MCF 10A (cell line): ENCODE measurements at regions of chr16 and their contacts with region 1.

Region 1: DNA sequence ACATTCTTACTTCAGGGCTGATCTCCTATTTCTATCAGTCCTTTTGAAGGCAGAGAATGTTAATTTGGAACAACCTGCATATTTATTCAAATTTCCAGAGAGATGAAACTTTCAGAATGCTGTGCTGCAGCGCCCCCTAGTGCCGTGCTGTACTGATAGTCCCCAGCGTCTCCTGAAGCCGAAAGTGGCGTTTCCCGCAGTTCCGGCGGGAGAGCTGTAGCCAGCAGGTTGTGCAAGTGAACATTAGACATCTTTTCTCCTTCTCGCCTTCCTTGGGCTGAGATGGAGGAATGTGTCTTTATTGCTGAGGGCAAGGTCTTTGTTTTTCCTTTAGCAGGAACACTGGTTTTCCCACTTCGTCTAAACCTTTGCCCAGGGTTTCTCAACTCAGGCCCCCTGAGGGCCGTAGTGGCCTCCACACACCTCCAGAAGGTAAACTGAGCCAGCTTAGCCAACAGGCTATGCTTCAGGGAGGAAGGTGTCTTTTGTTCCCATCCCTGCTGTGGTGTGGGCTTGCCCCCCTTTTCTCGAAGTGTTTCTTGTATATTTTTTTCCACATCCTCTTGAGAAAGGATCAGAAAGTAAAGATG is 26.4 kb downstream of the USP10 start:
- DNase-seq: peak; percentile 89
- H3K4me3 Mint-ChIP-seq: peak overlapping the region; percentile 28
- H3K27ac Mint-ChIP-seq: no peak overlapping the region
- H3K4me1 Mint-ChIP-seq: peaks cover 26% of the 10 kb centered on the region
- H3K27me3 Mint-ChIP-seq: no peaks in the 10 kb centered on the region
- CTCF ChIP-seq: peak; percentile 93

Region 2: DNA sequence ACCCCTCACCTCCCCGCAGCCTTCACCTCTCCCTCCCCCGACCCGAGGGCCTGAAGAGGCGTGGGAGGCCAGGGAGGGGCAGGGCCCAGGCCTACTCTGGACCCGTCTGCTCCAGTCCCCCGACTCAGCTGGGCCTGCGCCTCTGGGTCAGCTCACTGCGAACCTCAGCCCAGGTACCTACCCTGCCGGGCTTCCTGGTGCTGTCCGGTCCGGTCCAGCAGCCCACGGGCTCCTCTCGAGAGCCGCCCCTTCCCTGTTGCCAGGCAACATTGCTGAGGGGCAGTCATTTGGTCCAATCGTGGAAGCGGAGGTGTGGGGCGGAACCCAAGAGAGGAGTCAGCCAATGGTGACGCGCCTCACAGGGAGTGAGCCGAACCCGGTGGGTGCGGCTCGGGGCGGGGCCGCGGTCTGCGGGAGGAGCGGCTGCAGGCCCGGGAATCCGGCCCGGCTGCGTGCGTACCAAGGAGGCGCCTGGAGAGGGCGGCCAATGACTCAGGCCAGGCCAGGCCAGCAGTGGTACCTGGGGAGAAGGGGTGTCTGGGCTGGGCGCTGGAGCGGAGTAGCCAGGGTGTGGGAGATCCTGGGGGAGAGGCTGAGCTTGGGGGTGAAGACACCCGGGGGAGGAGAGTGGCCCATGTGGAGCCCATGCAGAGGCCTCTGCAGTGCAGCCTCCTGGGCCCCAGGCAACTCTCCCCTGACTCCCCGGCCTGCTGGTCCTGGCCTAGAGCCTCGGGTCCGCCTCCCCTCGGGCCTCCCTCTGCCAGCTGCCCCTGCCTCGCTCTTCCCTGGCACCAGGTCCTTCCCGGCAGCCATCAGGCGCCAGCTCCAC is 221.5 kb before region 1 on chr16 and contains the start of gene MEAK7:
- CTCF ChIA-PET with region 1: interaction called, 20 read pairs
- POLR2A ChIA-PET with region 1: interaction called, 11 read pairs
- intact Hi-C with region 1: no loop called
- DNase-seq: peak; percentile 99
- H3K4me3 Mint-ChIP-seq: peak within 1 kb of the TSS; percentile 84
- H3K27ac Mint-ChIP-seq: peak within 1 kb of the TSS; percentile 88
- H3K4me1 Mint-ChIP-seq: peaks cover 52% of the 10 kb centered on the region
- H3K27me3 Mint-ChIP-seq: no peaks in the 10 kb centered on the region
- CTCF ChIP-seq: no peak
- total RNA-seq, gene MEAK7: 62.3 and 66.8 TPM in 2 replicates

Region 3: GRCh38 chr16:84635699-84636098 is 90.5 kb before region 1 on chr16:
- CTCF ChIA-PET with region 1: interaction called, 13 read pairs
- POLR2A ChIA-PET with region 1: no interaction called
- intact Hi-C with region 1: no loop called
- DNase-seq: no peak
- H3K4me3 Mint-ChIP-seq: no peak overlapping the region
- H3K27ac Mint-ChIP-seq: no peak overlapping the region
- H3K4me1 Mint-ChIP-seq: peaks cover 5% of the 10 kb centered on the region
- H3K27me3 Mint-ChIP-seq: no peaks in the 10 kb centered on the region
- CTCF ChIP-seq: no peak

Region 4: DNA sequence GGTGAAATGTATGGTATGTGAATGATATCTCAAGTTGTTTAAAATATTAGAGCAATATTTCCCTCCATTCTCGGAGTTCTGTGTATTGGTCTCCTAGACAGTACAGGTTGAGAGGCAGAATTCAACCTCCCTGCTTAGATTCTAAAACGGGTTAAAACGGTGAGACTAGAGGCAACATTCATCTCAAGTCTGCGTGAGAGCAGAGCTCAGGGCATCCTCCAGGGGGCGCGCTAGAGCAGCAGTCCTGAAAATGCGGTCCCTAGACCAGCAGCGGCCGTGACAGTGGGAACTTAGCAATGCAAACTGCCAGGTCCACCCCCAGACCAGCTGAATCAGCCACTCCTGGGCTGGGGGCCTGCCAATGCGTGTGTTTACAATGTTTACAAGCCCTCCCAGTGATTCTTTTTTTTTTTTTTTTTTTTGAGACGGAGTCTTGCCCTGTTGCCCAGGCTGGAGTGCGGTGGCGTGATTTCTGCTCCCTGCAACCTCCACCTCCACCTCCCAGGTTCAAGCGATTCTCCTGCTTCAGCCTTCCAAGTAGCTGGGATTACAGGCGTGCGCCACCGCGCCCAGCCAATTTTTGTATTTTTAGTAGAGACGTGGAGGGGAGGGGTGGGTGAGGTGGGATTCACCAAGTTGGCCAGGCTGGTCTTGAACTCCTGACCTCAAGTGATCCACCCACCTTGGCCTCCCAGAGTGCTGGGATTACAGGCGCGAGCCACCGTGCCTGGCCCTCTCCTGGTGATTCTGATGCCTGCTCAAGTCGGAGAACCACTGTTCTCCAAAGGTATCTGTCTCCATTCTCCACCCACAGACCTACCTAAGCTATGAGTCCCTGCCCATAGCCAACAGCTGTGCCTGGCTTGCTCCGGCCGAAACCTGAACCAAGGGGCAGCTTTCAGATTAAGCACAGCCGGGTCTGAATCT is 53.6 kb before region 1 on chr16:
- CTCF ChIA-PET with region 1: interaction called, 64 read pairs
- POLR2A ChIA-PET with region 1: interaction called, 18 read pairs
- intact Hi-C with region 1: loop called (anchors 1 kb)
- DNase-seq: peak; percentile 73
- H3K4me3 Mint-ChIP-seq: no peak overlapping the region
- H3K27ac Mint-ChIP-seq: no peak overlapping the region
- H3K4me1 Mint-ChIP-seq: peaks cover 17% of the 10 kb centered on the region
- H3K27me3 Mint-ChIP-seq: no peaks in the 10 kb centered on the region
- CTCF ChIP-seq: peak; percentile 89

Region 5: GRCh38 chr16:84714028-84714427 is 12.1 kb before region 1 on chr16:
- CTCF ChIA-PET with region 1: interaction called, 52 read pairs
- POLR2A ChIA-PET with region 1: interaction called, 4 read pairs
- intact Hi-C with region 1: no loop called
- DNase-seq: no peak
- H3K4me3 Mint-ChIP-seq: no peak overlapping the region
- H3K27ac Mint-ChIP-seq: no peak overlapping the region
- H3K4me1 Mint-ChIP-seq: peaks cover 42% of the 10 kb centered on the region
- H3K27me3 Mint-ChIP-seq: no peaks in the 10 kb centered on the region
- CTCF ChIP-seq: no peak